ENCODE measurements at regions of chr7 and their contacts with region 1.

Region 1: DNA sequence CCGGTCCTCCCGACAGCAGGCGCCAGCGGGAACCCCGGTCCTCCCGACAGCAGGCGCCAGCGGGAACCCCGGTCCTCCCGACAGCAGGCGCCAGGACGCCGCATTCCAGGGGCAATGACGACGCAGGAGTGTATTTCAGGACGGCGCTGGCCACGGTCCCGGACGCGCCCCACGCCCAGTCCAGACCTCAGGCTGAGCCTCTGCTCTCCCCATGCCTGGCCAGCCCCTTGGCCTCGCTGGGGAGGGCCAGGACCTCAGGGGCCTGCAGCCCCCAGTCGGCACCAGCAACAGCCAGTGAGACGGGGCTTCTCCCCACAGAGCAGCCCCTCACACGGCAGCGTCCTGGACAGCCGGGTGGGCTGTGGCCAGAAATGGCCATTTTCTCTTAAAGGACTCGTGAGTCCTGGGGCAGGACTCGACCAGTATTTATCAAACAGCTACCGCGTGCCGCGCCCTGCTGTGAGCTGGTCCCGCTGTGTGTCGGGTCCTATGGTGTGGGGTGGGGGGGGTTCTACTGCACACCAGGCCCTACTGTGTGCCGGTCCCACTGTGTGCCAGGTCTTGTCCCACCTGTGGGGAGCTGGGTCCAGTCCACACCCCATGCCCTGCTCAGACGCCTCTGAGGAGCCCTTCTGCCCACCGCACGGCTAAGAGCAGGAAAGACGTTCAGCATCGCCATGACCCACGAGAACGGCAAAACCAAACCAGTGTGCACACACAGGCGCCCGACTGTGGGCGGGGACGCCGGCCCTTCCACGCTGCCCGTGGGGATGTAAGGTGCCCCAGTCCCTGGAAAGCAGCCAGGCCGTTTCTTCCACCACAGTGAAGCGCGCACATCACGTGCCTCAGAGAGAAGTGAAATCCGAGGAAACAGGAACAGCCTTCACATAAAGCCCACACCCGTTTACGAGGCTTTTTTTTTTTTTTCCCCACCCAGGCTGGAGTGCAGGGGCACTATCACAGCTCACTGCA is 33.3 kb downstream of the GET4 start:
- DNase-seq: no peak
- ATAC-seq: peak; percentile 28; the same call in 1 of the 2 replicates
- H3K4me3 ChIP-seq: peak overlapping the region; percentile 18 to 25; a peak in 3 of 4 replicates
- H3K27ac ChIP-seq: no peak overlapping the region
- H3K4me1 ChIP-seq: peaks cover 12% of the 10 kb centered on the region
- H3K27me3 ChIP-seq: no peaks in the 10 kb centered on the region; the same call in 1 of the 2 replicates
- CTCF ChIP-seq: no peak; the same call in 1 of the 2 replicates

Region 2: DNA sequence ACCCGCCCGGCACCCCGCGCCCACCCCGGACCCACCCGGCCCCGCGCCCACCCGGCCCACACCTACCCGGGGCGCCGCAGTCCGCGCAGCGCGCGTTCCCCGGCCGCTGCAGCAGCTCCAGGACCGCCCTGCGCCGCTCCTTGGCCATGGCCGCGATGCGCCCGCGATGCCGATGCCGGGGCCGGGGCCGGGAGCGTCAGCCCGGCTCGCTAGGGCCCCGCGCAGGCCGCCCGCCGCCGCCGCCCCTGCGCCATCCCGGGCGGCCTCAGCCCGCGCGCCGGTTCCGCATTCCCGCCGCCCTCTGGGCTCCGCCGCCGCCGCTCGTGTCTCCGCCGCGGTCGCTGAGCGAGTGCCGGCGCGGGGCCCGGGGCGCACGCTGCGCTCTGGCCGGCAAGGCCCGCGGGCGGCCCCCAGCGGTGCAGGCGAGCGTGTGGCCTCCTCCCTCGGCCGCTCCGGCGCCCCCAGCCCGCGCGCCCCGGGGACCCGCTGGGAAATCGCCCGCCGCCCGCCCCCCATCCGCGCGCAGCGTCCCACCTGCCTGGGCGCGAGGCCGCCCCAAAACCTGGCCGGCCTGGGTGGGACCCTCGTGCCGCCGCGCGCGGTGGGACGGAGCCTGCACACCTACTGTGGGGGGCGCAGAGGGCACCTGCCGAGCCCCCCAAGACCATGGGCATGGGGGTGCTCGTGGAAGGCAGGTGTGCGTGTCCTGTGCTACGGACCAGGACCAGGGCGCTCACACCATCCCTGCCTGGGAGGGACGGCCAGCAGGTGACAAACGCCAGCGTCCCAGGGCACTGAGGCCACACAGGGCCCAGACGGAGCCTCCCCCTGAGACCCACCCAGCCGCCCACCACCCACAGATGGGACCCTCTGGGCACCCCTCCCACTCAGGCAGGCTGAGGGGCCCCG is 44.9 kb after region 1 on chr7 and contains the start of gene ADAP1:
- CTCF ChIA-PET with region 1: interaction called, 4 read pairs
- POLR2A ChIA-PET with region 1: no interaction called
- in situ Hi-C with region 1: no loop called
- intact Hi-C with region 1: loop called (anchors 2 kb)
- DNase-seq: no peak
- ATAC-seq: peak; percentile 77
- H3K4me3 ChIP-seq: peak within 1 kb of the TSS; percentile 44 to 46
- H3K27ac ChIP-seq: no peak within 1 kb of the TSS
- H3K4me1 ChIP-seq: 0 out of 2 replicates have a peak, but pooled peaks cover 4% of the 10 kb centered on the region
- H3K27me3 ChIP-seq: no peaks in the 10 kb centered on the region
- CTCF ChIP-seq: peak; percentile 92; the same call in 1 of the 2 replicates
- total RNA-seq, gene ADAP1: 3.1 TPM

Region 3: DNA sequence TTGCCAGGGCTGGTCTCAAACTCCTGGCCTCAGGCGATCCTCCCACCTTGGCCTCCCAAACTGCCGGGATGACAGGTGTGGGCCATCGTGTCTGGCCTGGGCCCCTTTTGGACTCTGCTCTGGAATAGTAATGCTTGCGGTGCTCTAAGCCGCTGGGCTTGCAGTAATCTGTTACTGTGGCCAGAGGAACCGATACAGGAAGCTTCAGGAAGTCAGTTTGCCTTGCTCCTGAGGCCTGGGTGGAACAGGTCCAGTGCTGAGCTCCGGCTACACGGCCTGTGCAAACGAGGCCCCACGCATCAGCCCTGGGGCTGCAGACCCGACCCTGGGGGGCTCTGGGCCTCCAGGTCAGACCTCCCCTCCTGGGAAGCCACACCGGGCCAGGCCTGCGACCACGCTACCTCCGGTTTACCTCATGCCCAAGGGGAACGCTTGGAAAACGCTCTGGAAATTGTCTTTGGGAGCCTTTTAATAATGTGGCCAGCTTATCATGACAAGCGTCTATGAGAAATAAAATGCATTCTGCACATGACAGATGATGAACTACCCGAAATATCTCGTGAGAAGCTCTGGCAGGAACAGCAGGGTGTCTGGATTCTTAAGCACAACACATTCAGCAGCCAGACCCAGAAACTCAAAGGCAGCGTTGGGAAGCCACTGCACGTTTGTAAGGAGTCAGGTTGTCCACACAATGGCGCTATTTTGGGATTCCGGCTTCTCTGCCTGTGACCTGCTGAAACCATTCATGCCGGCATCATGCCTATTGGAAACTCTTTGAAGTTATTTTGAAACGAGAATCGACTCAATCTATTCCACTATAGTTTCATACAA is 55.0 kb after region 1 on chr7:
- CTCF ChIA-PET with region 1: no interaction called
- POLR2A ChIA-PET with region 1: no interaction called
- in situ Hi-C with region 1: no loop called
- intact Hi-C with region 1: no loop called
- DNase-seq: no peak
- ATAC-seq: peak; percentile 61
- H3K4me3 ChIP-seq: no peak overlapping the region
- H3K27ac ChIP-seq: no peak overlapping the region
- H3K4me1 ChIP-seq: peaks cover 17% of the 10 kb centered on the region
- H3K27me3 ChIP-seq: no peaks in the 10 kb centered on the region
- CTCF ChIP-seq: no peak

Region 4: DNA sequence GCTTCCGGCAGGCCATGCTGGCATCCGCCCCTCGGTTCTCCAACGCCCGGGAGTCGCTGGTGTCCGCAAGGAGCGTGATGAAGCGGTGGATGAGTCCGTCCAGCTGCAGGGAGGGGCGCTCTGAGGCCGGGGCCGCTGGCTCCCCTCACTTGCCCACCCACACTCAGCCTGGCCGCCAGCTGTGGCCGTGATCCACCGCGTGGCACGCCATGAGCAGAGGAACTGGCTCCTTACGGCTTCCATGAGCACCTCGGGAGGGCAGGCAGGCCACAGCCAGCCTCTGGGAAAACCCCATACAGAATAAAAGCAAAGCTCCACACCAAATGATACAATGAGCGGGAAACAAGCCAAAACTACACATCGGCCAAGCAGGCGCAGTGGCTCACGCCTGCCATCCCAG is 565.1 kb after region 1 on chr7:
- CTCF ChIA-PET with region 1: no interaction called
- POLR2A ChIA-PET with region 1: interaction called, 13 read pairs
- in situ Hi-C with region 1: no loop called
- intact Hi-C with region 1: no loop called
- DNase-seq: no peak
- ATAC-seq: no peak
- H3K4me3 ChIP-seq: no peak overlapping the region
- H3K27ac ChIP-seq: no peak overlapping the region
- H3K4me1 ChIP-seq: no peaks in the 10 kb centered on the region
- H3K27me3 ChIP-seq: no peaks in the 10 kb centered on the region
- CTCF ChIP-seq: no peak

Measured in Panc1 (cell line).